ENCODE measurements at regions of chr10 and their contacts with region 1.

Region 1: DNA sequence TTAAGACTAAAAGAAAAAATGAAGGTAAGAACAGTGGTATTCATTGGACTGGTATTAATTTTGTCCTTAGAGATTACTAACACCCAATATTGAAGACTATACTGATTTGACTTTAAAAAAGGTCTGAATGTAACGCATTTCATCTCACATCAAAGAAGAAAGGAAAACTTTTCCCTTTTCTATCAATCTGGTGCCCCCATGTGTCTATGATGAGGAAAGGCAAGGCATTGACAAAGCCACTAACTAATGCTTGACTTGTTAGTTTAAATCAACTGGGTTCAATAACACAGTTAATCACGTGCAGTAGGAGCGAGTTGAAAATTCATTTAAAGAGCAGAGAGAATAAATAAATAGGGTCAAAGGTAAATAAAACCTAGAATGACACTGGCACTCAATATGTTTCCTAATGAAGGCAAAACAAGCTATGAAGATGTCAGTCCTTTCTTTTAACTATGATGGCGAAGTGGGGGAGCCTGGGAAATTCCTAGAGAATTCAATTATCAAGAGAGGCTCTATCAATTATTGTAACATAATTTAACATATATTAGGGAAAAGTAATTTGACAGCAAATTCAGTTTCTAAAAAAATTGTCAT is 180.9 kb downstream of the ANK3 start:
- DNase-seq: peak in 3 of 42 donors; percentile 17 to 41 (median 30)

Region 2: GRCh38 chr10:60099998-60100747 is 108.6 kb before region 1 on chr10:
- intact Hi-C with region 1: loop called (anchors 10 kb)
- DNase-seq: peak in 15 of 42 donors; percentile 19 to 70 (median 28)

Region 3: DNA sequence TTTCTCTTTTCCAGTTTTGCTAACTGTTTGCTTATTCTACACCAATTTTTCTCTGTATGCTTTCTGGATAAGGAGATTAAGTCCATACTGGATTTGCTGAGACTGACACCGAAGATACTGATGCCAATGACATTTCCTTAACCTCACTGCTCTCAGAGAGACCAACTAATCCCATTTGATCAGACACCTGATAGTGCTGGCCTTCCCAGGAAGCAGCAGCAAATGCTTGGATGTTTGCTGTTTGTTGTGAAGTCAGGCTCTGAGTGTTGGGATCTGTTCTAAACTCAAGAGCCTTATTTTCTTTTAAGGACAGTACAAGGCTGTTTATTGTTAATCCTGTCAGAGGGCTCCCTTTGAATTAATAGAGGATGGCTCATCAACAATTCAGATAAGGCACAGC is 37.6 kb after region 1 on chr10:
- intact Hi-C with region 1: no loop called
- DNase-seq: no peak

Region 4: GRCh38 chr10:60434418-60435046 is 225.8 kb after region 1 on chr10:
- intact Hi-C with region 1: loop called (anchors 10 kb)
- DNase-seq: peak in 35 of 42 donors; percentile 15 to 85 (median 58)